Activated CD4-positive, alpha-beta memory T cell treated with anti-CD3 and anti-CD28 coated beads for 36 hours (primary cell): ENCODE measurements at regions of chr10 and their contacts with region 1.

Region 1: DNA sequence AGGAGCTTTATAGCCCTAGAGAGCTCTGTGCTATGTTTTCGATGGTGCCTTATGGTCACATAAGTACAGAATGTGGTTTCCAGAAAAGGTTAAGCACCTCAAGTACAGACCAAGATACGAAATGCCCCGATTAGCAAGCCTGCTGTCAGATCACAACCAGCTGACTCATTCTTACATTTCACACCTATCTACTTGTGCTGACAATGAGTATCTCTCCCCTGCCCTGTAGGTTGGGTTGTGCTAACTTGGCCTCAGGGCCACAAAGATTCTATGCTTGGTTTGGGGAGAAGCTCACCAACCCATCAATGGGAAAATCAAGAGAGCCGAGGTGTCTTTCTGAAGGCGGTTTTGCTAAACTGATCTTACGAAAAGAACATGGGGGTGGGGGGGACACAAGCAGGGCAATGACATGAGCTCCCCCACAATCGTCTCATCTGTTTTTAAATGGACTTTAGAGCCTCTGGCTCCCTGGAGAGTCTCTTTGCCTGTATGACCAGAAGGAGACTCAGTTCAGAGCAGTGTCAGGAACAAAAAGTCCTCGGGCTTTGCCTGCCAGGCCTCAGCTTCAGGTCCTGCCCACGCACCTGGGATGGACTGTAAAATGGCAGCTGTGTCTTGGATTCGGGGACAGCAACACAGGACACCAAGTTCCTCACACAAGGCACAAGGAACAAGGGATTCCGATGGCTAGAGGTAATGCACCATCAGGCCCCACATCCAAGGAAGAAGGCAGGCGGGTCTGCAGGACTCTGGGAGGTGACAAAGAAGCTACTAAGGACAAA is 55.1 kb downstream of the FAM53B start:
- DNase-seq: peak; percentile 87
- H3K4me3 Mint-ChIP-seq: peak overlapping the region; percentile 44
- H3K27ac Mint-ChIP-seq: peak overlapping the region; percentile 92
- H3K4me1 Mint-ChIP-seq: peaks cover 87% of the 10 kb centered on the region
- H3K27me3 Mint-ChIP-seq: no peaks in the 10 kb centered on the region

Region 2: GRCh38 chr10:124612611-124613498 is 76.2 kb before region 1 on chr10:
- CTCF ChIA-PET with region 1: interaction called, 10 read pairs
- POLR2A ChIA-PET with region 1: interaction called, 9 read pairs
- intact Hi-C with region 1: loop called (anchors 2 kb)
- DNase-seq: peak; percentile 39
- H3K4me3 Mint-ChIP-seq: no peak overlapping the region
- H3K27ac Mint-ChIP-seq: no peak overlapping the region
- H3K4me1 Mint-ChIP-seq: peaks cover 34% of the 10 kb centered on the region
- H3K27me3 Mint-ChIP-seq: no peaks in the 10 kb centered on the region

Region 3: DNA sequence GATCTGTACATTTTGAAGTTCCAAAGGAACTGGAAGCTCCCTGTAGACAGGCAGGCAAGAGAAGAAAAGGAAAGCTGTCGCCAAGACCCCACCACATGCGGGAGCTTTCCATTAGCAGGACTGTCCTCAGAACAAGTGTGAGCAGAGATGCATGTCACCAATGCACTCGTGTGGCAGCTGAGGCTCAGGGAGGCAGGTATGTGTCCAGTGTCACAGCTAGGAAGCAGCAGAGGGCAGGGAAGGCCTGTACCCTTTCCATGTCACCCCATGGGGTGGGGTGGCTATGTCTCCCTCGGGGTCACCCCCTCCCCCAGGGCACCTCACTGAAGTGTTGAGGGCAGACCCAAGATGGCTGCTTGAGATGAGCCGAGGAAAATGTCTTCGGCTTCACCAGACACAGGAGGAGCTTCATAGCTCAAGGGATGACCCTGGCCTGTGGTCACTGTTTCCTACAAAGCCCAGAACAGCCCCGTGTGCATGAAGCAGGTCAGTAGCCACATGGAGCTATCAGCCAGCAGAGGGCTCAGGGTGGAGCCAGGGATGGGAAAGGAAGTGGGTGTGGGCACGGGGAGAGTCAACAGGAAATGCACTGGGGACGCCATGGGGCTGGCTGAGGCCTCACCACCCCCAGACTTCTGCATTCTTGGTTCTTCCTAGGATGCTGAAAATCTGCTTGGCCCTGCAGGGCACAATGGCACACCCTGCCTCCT is 41.5 kb before region 1 on chr10:
- CTCF ChIA-PET with region 1: interaction called, 39 read pairs
- POLR2A ChIA-PET with region 1: interaction called, 28 read pairs
- intact Hi-C with region 1: loop called (anchors 1 kb)
- DNase-seq: peak; percentile 87
- H3K4me3 Mint-ChIP-seq: peak overlapping the region; percentile 58
- H3K27ac Mint-ChIP-seq: peak overlapping the region; percentile 93
- H3K4me1 Mint-ChIP-seq: peaks cover 91% of the 10 kb centered on the region
- H3K27me3 Mint-ChIP-seq: no peaks in the 10 kb centered on the region

Region 4: GRCh38 chr10:124677749-124678556 is 11.1 kb before region 1 on chr10:
- CTCF ChIA-PET with region 1: interaction called, 14 read pairs
- POLR2A ChIA-PET with region 1: interaction called, 19 read pairs
- intact Hi-C with region 1: loop called (anchors 1 kb)
- DNase-seq: no peak
- H3K4me3 Mint-ChIP-seq: peak overlapping the region; percentile 7
- H3K27ac Mint-ChIP-seq: peak overlapping the region; percentile 77
- H3K4me1 Mint-ChIP-seq: peaks cover 78% of the 10 kb centered on the region
- H3K27me3 Mint-ChIP-seq: no peaks in the 10 kb centered on the region

Region 5: GRCh38 chr10:124732931-124733570 is 44.0 kb after region 1 on chr10:
- CTCF ChIA-PET with region 1: interaction called, 22 read pairs
- POLR2A ChIA-PET with region 1: interaction called, 49 read pairs
- intact Hi-C with region 1: loop called (anchors 1 kb)
- DNase-seq: peak; percentile 90
- H3K4me3 Mint-ChIP-seq: peak overlapping the region; percentile 69
- H3K27ac Mint-ChIP-seq: peak overlapping the region; percentile 91
- H3K4me1 Mint-ChIP-seq: peaks cover 91% of the 10 kb centered on the region
- H3K27me3 Mint-ChIP-seq: no peaks in the 10 kb centered on the region